ENCODE measurements at regions of chr1 and their contacts with region 1.

Region 1: DNA sequence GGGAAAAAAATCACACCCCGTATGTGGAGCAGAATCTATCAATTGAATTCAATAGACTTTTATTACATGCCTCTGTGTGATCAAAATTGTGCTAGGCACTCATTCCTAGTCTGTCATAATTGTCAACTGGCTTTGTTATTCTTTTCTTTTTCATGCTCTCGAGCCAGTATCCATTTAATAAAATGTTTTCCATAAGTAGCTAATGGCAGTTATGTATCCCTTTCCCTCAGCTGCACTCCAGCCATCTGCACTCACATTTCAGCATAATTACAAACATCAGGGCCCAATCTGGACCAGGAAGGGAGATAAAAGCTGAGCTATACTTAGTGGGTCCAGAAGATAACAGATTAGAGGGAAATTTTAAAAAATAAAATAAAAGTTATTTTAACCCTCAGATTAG is 15.9 kb downstream of the RGS5 start:
- DNase-seq: no peak
- H3K4me3 ChIP-seq: no peak overlapping the region
- H3K27ac ChIP-seq: no peak overlapping the region
- H3K27me3 ChIP-seq: no peaks in the 10 kb centered on the region
- CTCF ChIP-seq: no peak

Region 2: GRCh38 chr1:162530307-162530987 is 656.4 kb before region 1 on chr1:
- intact Hi-C with region 1: no loop called
- DNase-seq: no peak
- H3K4me3 ChIP-seq: no peak overlapping the region
- H3K27ac ChIP-seq: no peak overlapping the region
- H3K27me3 ChIP-seq: no peaks in the 10 kb centered on the region
- CTCF ChIP-seq: no peak

Region 3: GRCh38 chr1:163307479-163308171 is 120.8 kb after region 1 on chr1:
- intact Hi-C with region 1: loop called in 1 of 2 experiments (anchors 10 kb)
- DNase-seq: no peak
- H3K4me3 ChIP-seq: no peak overlapping the region
- H3K27ac ChIP-seq: no peak overlapping the region
- H3K27me3 ChIP-seq: no peaks in the 10 kb centered on the region
- CTCF ChIP-seq: no peak

Region 4: DNA sequence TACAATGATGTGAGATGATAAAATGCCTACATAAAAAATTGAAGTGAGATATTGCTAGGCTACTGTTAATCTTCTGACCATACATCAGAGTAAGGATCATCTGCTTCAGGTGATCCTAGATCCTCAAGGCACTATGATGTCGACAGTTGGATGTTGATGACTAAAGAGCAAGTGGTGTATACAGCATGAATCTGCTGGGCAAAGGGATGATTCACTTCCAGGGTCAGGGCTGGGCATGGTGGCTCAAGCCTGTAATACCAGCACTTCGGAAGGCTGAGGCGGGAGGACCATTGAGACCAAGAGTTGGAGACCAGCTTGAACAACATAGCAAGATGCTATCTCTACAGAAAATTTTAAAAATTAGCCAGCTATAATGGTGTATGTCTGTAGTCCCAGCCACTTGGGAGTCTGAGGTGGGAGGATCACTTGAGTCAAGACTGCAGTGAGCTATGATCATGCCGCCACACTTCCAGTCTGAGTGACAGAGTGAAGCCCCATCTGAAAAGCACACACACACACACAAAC is 159.5 kb after region 1 on chr1:
- intact Hi-C with region 1: no loop called
- DNase-seq: no peak
- H3K4me3 ChIP-seq: no peak overlapping the region
- H3K27ac ChIP-seq: no peak overlapping the region
- H3K27me3 ChIP-seq: no peaks in the 10 kb centered on the region
- CTCF ChIP-seq: no peak